Lower leg skin (tissue), 4 donors: ENCODE measurements at regions of chr11 and their contacts with region 1.

Region 1: GRCh38 chr11:129489254-129489653 is 113.6 kb downstream of the BARX2 start:
- DNase-seq: no peak
- H3K4me3 ChIP-seq: no peak overlapping the region
- CTCF ChIP-seq: no peak
- POLR2A ChIP-seq: no peak

Region 2: DNA sequence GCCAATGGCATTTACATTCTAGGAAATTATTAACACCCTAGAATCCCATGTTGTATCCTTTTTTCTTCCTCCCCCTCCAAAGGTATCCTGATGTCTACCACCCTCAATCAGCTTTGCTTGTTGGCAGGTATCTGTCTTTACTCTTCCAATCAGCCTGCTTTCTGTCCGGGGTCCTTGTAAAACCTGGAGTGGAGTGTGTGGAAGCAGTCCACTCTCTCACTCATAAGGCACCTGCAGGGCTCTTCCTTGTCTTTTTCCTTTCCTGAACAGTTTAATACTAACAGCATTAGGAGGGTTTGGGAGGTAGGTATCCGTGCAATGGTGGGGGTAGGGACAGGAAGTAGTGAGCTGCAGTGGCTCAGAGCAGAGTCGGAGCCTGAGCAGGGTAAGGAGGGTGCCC is 79.8 kb after region 1 on chr11:
- intact Hi-C with region 1: no loop called
- DNase-seq: no peak
- H3K4me3 ChIP-seq: no peak overlapping the region
- CTCF ChIP-seq: no peak
- POLR2A ChIP-seq: no peak

Region 3: GRCh38 chr11:130359419-130359818 is 870.2 kb after region 1 on chr11:
- intact Hi-C with region 1: loop called (anchors 10 kb)
- DNase-seq: no peak
- H3K4me3 ChIP-seq: no peak overlapping the region
- CTCF ChIP-seq: no peak
- POLR2A ChIP-seq: no peak